ENCODE measurements at regions of chr12 and their contacts with region 1.

Region 1: GRCh38 chr12:129911428-129912049 is 7.7 kb upstream of the TMEM132D start:
- DNase-seq: no peak
- ATAC-seq: peak; percentile 90
- H3K4me3 ChIP-seq: no peak overlapping the region
- H3K27ac ChIP-seq: no peak overlapping the region
- H3K4me1 ChIP-seq: no peaks in the 10 kb centered on the region
- H3K27me3 ChIP-seq: no peaks in the 10 kb centered on the region
- CTCF ChIP-seq: peak; percentile 74 to 92 (median 83); a peak in 5 of 6 replicates
- EP300 ChIP-seq: no peak
- POLR2A ChIP-seq: no peak
- RAD21 ChIP-seq: peak; percentile 95

Region 2: DNA sequence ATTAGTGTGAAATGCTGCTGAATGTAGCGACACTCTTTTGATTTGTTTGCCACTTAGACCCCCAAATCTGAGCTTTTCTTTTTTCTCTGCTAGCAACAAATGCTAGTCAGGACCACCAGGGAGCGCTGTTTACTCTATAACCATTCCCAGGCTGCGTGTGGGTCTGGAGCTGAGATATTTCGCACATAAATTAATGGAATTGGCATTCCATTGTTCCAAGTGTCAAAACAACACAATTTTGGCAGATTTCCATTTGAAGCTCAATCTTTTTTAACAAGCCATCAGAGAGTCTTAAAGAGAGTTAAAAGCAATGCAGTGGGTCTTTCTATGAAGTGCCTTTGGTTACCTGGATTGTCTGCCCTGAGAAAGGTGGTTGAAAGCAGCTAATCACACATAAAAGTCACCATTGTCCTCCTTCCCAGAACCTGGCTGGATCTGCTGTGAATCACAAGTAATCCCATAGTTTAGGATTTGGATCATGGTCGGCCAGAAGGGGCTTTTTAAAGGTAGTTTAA is 1651.9 kb before region 1 on chr12:
- CTCF ChIA-PET with region 1: interaction called, 26 read pairs
- POLR2A ChIA-PET with region 1: no interaction called
- RAD21 ChIA-PET with region 1: interaction called, 17 read pairs
- SMC1A ChIA-PET with region 1: interaction called, 6 read pairs
- in situ Hi-C with region 1: loop called (anchors 10 kb)
- intact Hi-C with region 1: loop called (anchors 1 kb)
- DNase-seq: no peak
- ATAC-seq: no peak
- H3K4me3 ChIP-seq: no peak overlapping the region
- H3K27ac ChIP-seq: no peak overlapping the region
- H3K4me1 ChIP-seq: no peaks in the 10 kb centered on the region
- H3K27me3 ChIP-seq: no peaks in the 10 kb centered on the region
- CTCF ChIP-seq: peak; percentile 54 to 74 (median 58); a peak in 5 of 6 replicates
- EP300 ChIP-seq: no peak
- POLR2A ChIP-seq: no peak
- RAD21 ChIP-seq: peak; percentile 76

Region 3: DNA sequence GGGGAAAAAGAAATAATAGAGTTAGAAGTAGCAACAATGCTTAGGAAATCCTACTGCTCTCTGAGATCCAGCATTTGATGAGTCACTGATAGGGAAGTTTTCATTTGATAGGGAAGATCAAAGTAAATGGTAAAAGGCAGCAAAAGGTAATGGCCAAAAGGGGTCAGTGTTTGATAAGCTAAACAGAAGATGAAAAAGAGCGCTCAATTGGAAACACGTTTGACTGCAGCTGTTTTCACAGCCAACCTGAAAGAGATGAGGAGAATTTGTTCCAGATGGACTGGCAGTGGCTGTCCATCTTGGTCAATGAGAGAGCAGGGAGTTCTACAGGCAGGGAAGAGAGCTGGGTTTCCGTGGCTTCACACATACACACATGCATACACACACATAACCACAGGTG is 1380.4 kb before region 1 on chr12:
- CTCF ChIA-PET with region 1: no interaction called
- POLR2A ChIA-PET with region 1: no interaction called
- RAD21 ChIA-PET with region 1: no interaction called
- SMC1A ChIA-PET with region 1: no interaction called
- in situ Hi-C with region 1: no loop called
- intact Hi-C with region 1: loop called (anchors 5 kb)
- DNase-seq: peak; percentile 3
- ATAC-seq: no peak
- H3K4me3 ChIP-seq: no peak overlapping the region
- H3K27ac ChIP-seq: no peak overlapping the region
- H3K4me1 ChIP-seq: no peaks in the 10 kb centered on the region
- H3K27me3 ChIP-seq: no peaks in the 10 kb centered on the region
- CTCF ChIP-seq: peak in 2 of 3 experiments; percentile 17 to 36; a peak in 2 of 6 replicates
- EP300 ChIP-seq: no peak
- POLR2A ChIP-seq: no peak
- RAD21 ChIP-seq: peak; percentile 51

Region 4: GRCh38 chr12:128644664-128645296 is 1266.8 kb before region 1 on chr12:
- CTCF ChIA-PET with region 1: interaction called, 6 read pairs
- POLR2A ChIA-PET with region 1: no interaction called
- RAD21 ChIA-PET with region 1: interaction called, 3 read pairs
- SMC1A ChIA-PET with region 1: interaction called, 3 read pairs
- in situ Hi-C with region 1: loop called (anchors 5 kb)
- intact Hi-C with region 1: loop called (anchors 1 kb)
- DNase-seq: no peak
- ATAC-seq: peak; percentile 64
- H3K4me3 ChIP-seq: no peak overlapping the region
- H3K27ac ChIP-seq: no peak overlapping the region
- H3K4me1 ChIP-seq: no peaks in the 10 kb centered on the region
- H3K27me3 ChIP-seq: no peaks in the 10 kb centered on the region
- CTCF ChIP-seq: peak; percentile 81 to 83 (median 83)
- EP300 ChIP-seq: no peak
- POLR2A ChIP-seq: no peak
- RAD21 ChIP-seq: peak; percentile 76

Region 5: GRCh38 chr12:128761379-128761790 is 1150.2 kb before region 1 on chr12:
- CTCF ChIA-PET with region 1: no interaction called
- POLR2A ChIA-PET with region 1: no interaction called
- RAD21 ChIA-PET with region 1: no interaction called
- SMC1A ChIA-PET with region 1: no interaction called
- in situ Hi-C with region 1: no loop called
- intact Hi-C with region 1: loop called (anchors 10 kb)
- DNase-seq: no peak
- ATAC-seq: no peak
- H3K4me3 ChIP-seq: no peak overlapping the region
- H3K27ac ChIP-seq: no peak overlapping the region
- H3K4me1 ChIP-seq: no peaks in the 10 kb centered on the region
- H3K27me3 ChIP-seq: peaks cover 0 to 2% of the 10 kb centered on the region in 2 experiments; a peak in 2 of 4 replicates
- CTCF ChIP-seq: no peak
- EP300 ChIP-seq: no peak
- POLR2A ChIP-seq: no peak
- RAD21 ChIP-seq: no peak

Region 6: DNA sequence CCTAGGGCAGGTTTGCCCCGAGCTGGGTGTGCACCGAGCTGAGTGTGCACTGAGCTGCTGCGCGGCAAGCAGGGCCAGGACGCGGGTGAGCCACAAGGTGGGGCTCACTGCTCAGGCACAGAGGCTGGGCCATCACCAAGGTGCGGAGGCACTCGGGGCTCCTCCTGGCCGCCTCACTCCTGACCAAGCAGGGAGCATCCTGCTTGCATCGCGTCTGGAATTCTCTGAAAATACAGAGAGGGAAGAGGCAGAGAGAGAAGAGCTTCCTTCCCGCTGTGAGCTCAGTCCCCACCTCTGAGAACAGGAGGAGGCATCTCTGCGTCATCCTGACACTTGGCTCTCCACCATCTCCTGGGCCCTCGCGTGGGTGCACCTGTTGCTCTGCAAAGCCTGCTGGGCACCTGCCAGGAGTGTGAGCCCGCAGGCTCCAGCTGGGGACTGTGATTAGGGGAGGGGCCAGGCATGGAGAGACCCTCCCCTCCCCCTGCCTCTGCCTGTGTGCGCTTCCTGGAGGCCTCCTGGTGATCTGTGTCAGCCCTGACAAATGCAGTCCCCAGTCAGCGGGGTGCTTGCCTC is 942.0 kb before region 1 on chr12:
- CTCF ChIA-PET with region 1: interaction called, 5 read pairs
- POLR2A ChIA-PET with region 1: no interaction called
- RAD21 ChIA-PET with region 1: interaction called, 9 read pairs
- SMC1A ChIA-PET with region 1: interaction called, 4 read pairs
- in situ Hi-C with region 1: loop called (anchors 10 kb)
- intact Hi-C with region 1: loop called (anchors 2 kb)
- DNase-seq: peak; percentile 20
- ATAC-seq: peak; percentile 95
- H3K4me3 ChIP-seq: no peak overlapping the region
- H3K27ac ChIP-seq: no peak overlapping the region
- H3K4me1 ChIP-seq: peaks cover 5% of the 10 kb centered on the region; the same call in 1 of the 2 replicates
- H3K27me3 ChIP-seq: no peaks in the 10 kb centered on the region
- CTCF ChIP-seq: peak; percentile 67 to 83 (median 81)
- EP300 ChIP-seq: no peak
- POLR2A ChIP-seq: no peak
- RAD21 ChIP-seq: peak; percentile 73

Region 7: DNA sequence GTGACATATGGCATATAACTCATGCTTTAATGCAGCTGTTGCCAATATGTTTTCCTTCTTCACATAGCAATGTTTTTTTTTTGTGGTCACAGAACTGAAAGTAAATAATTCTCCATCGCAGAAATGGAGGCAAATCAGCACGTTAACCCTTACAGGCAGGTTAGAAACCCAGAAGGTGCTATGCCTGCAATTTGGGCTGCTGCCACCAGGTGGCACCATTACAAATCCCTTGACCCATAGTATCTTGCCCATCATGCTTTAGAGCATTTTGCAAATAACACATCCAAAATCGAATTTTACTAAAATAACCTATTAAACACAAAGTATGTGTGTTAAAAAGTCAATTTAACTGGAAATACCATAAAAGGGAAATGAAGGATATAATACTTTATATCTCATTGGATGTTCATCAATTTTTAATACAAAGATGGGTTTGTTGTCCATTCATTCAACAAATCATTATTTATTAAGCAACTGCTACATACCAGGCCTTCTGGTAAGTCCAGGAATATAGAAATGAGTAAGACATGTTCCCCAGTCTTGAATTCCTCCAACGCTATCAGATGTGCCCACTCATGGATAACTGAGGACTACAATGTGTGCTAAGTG is 718.2 kb before region 1 on chr12:
- CTCF ChIA-PET with region 1: interaction called, 3 read pairs
- POLR2A ChIA-PET with region 1: no interaction called
- RAD21 ChIA-PET with region 1: no interaction called
- SMC1A ChIA-PET with region 1: no interaction called
- in situ Hi-C with region 1: no loop called
- intact Hi-C with region 1: loop called (anchors 2 kb)
- DNase-seq: no peak
- ATAC-seq: no peak
- H3K4me3 ChIP-seq: no peak overlapping the region
- H3K27ac ChIP-seq: no peak overlapping the region
- H3K4me1 ChIP-seq: no peaks in the 10 kb centered on the region
- H3K27me3 ChIP-seq: no peaks in the 10 kb centered on the region
- CTCF ChIP-seq: peak; percentile 19 to 63 (median 52)
- EP300 ChIP-seq: no peak
- POLR2A ChIP-seq: no peak
- RAD21 ChIP-seq: peak; percentile 18; the same call in 1 of the 2 replicates

Measured in GM12878 (cell line).